Activated naive CD4-positive, alpha-beta T cell treated with anti-CD3 and anti-CD28 coated beads for 36 hours (primary cell): ENCODE measurements at regions of chr16 and their contacts with region 1.

Region 1: DNA sequence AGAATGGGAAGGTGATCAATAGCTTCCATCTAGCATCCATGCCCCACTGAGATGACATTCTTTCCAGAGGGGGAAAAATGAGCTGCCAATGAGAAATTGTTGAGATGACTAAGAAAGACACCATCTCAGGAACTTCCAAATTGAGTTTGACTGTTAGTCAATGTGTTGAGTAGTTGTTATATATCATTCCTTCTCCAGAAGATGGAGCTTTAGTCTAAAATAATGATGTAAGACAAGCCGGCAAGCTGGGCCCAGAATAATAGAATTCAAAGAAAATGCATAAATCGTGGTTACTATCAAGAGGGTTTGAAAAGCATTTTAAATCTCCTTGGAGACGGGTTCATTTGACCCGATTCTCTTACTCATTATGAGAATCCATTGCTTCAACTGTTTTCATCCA is 71.0 kb upstream of the ATF7IP2 start:
- DNase-seq: peak; percentile 16
- H3K4me3 Mint-ChIP-seq: no peak overlapping the region
- H3K27ac Mint-ChIP-seq: no peak overlapping the region
- H3K4me1 Mint-ChIP-seq: peaks cover 11% of the 10 kb centered on the region
- H3K27me3 Mint-ChIP-seq: no peaks in the 10 kb centered on the region

Region 2: GRCh38 chr16:9578459-9578858 is 736.4 kb before region 1 on chr16:
- CTCF ChIA-PET with region 1: no interaction called
- intact Hi-C with region 1: no loop called
- DNase-seq: no peak
- H3K4me3 Mint-ChIP-seq: no peak overlapping the region
- H3K27ac Mint-ChIP-seq: no peak overlapping the region
- H3K4me1 Mint-ChIP-seq: no peaks in the 10 kb centered on the region
- H3K27me3 Mint-ChIP-seq: no peaks in the 10 kb centered on the region

Region 3: GRCh38 chr16:10027553-10027952 is 287.3 kb before region 1 on chr16:
- CTCF ChIA-PET with region 1: no interaction called
- intact Hi-C with region 1: no loop called
- DNase-seq: no peak
- H3K4me3 Mint-ChIP-seq: no peak overlapping the region
- H3K27ac Mint-ChIP-seq: no peak overlapping the region
- H3K4me1 Mint-ChIP-seq: no peaks in the 10 kb centered on the region
- H3K27me3 Mint-ChIP-seq: no peaks in the 10 kb centered on the region

Region 4: GRCh38 chr16:10256784-10257641 is 57.8 kb before region 1 on chr16:
- CTCF ChIA-PET with region 1: interaction called, 5 read pairs
- intact Hi-C with region 1: loop called (anchors 2 kb)
- DNase-seq: peak; percentile 53
- H3K4me3 Mint-ChIP-seq: no peak overlapping the region
- H3K27ac Mint-ChIP-seq: no peak overlapping the region
- H3K4me1 Mint-ChIP-seq: peaks cover 6% of the 10 kb centered on the region
- H3K27me3 Mint-ChIP-seq: peaks cover 5% of the 10 kb centered on the region

Region 5: DNA sequence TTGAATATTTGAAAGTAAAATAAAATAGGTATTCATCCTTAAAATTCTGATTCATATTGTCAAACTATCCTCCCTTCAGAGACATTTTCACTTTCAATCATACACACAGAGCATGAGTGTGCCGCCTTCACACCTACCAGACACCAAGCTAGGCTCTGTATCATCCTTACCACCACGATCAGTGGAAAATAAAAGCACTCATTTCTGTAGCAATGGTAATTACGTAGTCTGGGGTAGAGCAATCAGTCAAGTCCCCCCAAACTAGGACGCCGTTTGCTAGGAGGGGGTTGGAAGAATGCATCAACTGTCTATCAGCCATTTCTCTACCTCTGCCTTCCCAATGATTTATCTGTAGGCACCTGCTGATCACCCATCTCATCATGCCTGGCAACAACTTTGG is 48.0 kb before region 1 on chr16:
- CTCF ChIA-PET with region 1: interaction called, 3 read pairs
- intact Hi-C with region 1: loop called (anchors 2 kb)
- DNase-seq: peak; percentile 61
- H3K4me3 Mint-ChIP-seq: no peak overlapping the region
- H3K27ac Mint-ChIP-seq: no peak overlapping the region
- H3K4me1 Mint-ChIP-seq: peaks cover 10% of the 10 kb centered on the region
- H3K27me3 Mint-ChIP-seq: no peaks in the 10 kb centered on the region

Region 6: GRCh38 chr16:10368969-10369551 is 54.2 kb after region 1 on chr16:
- CTCF ChIA-PET with region 1: no interaction called
- intact Hi-C with region 1: no loop called
- DNase-seq: no peak
- H3K4me3 Mint-ChIP-seq: no peak overlapping the region
- H3K27ac Mint-ChIP-seq: no peak overlapping the region
- H3K4me1 Mint-ChIP-seq: no peaks in the 10 kb centered on the region
- H3K27me3 Mint-ChIP-seq: no peaks in the 10 kb centered on the region

Region 7: DNA sequence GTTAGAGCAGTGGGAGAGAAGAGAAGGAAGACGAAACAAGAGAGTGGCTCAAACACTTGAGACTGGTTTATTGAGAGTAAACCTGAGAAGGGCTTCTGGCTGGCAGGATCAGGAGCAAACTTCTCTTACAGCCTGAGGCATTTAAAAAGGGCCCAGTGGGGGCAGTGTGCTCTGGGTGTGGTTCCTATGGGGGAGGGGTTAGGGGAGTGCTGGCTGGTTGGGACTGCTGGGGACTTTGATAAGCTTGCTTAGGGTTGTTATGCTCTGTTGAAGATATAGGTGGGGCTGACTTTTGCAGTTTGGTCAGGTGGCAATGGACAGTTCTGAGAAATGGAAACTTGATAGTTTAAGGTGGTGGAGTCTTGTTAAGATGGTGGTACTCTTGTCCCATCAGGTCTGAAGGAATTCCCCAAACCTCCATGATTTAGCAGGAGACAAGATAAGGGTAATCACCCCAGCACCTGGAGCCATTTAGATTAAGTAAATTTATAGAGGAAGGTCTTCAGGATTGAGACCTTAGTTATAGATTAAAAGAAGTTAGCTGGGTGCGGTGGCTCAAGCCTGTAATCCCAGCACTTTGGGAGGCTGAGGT is 186.3 kb after region 1 on chr16:
- CTCF ChIA-PET with region 1: interaction called, 7 read pairs
- intact Hi-C with region 1: loop called (anchors 2 kb)
- DNase-seq: peak; percentile 14
- H3K4me3 Mint-ChIP-seq: no peak overlapping the region
- H3K27ac Mint-ChIP-seq: no peak overlapping the region
- H3K4me1 Mint-ChIP-seq: peaks cover 2% of the 10 kb centered on the region
- H3K27me3 Mint-ChIP-seq: no peaks in the 10 kb centered on the region

Region 8: DNA sequence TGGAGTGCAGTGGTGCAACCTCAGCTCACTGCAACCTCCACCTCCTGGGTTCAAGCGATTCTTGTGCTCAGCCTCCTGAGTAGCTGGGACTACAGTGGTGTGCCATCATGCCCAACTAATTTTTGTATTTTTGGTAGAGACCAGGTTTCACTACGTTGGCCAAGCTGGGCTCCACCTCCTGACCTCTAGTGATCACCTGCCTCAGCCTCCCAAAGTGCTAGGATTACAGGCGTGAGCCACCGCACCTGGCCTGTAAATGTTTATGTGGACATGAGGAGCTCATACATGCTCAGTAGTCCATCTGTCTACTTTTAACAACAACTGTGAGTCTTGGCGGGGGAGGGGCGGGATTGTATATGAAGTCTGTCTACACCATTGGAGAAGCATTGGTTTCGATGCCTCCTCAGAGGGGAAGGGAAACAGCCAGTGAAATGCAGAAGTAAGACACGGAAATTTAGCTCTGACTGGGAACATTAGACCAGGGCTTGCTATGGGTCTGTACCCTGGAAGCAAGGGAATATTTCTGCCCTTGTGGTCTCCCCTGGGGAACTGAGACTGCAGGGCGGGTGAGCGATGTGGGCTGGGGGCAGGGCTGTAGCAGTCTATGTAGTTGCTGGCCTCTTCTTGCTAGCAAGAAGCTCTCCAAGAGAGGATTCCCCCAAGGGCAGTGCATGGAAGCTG is 438.2 kb after region 1 on chr16:
- CTCF ChIA-PET with region 1: no interaction called
- intact Hi-C with region 1: no loop called
- DNase-seq: peak; percentile 11
- H3K4me3 Mint-ChIP-seq: no peak overlapping the region
- H3K27ac Mint-ChIP-seq: no peak overlapping the region
- H3K4me1 Mint-ChIP-seq: peaks cover 29% of the 10 kb centered on the region
- H3K27me3 Mint-ChIP-seq: no peaks in the 10 kb centered on the region